Activated CD8-positive, alpha-beta T cell treated with anti-CD3 and anti-CD28 coated beads, Interleukin-2, amount 10 ng/mL, durations not matched to agents 7 days and 5 days (primary cell): ENCODE measurements at regions of chr6 and their contacts with region 1.

Region 1: DNA sequence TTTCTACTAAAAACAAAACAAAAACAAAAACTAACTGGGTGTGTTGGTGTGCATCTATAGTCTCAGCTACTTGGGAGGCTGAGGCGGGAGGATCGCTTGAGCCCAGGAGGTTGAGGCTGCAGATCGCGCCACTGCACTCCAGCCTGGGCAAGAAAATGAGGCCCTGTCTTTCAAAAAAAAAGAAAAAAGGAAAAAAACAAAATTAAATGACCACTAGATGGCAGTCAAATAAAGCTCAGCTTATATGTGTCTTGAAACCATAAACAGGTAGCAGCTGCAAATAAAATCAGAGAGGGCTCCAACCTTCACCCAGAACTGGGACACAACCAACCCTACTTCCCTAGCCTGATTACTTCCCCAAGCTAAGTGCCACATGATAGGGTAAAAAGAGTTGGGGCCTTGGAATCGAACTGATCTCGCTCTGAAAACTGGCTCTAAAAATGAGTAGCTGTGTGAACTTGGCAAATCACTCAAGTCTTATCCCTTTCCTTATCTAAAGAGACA is 67.1 kb upstream of the ADGRF4 start:
- DNase-seq: no peak
- ATAC-seq: peak; percentile 67
- H3K4me3 Mint-ChIP-seq: no peak overlapping the region
- H3K27ac Mint-ChIP-seq: peak overlapping the region; percentile 5
- H3K4me1 Mint-ChIP-seq: peaks cover 12% of the 10 kb centered on the region
- H3K27me3 Mint-ChIP-seq: peaks cover 5% of the 10 kb centered on the region

Region 2: DNA sequence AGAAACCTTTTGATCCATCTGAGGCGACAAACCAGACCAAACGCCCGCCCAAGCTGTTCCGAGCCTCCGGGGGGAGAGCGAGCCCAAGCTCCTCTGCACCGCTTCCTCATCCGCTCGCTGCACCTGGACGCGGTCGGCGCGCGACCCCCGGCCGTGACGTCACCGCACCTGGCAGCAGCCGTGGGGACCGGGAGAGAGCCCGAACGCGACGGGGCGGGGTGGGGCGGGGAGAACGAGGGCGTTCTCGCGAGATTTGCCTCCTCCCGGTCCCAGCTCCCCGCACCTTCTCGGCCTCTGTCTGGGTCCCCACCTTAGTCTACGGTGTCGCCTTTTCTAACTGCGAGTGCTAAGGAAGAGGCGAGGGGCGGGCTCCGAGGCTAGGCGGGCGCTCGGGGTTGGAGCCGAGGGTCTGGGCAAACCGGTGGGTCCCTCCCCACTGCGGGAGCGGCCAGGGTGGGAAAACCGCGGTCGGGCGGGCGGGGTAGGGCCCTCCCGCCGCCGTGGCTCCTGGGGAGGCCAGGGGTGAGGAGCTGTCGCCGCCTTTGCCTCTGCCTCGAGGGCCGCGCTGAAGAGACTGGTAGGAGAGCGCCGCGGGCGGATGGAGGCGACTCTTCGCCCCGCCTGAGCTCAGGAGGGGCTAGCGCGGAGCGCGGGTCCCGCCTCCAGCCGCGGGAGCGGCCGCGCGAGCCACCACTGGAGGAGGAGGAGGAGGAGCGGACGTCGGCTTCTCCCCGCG is 153.7 kb before region 1 on chr6 and contains the start of gene CD2AP:
- CTCF ChIA-PET with region 1: interaction called, 6 read pairs
- POLR2A ChIA-PET with region 1: interaction called, 10 read pairs
- DNase-seq: peak; percentile 94
- ATAC-seq: peak; percentile 84
- H3K4me3 Mint-ChIP-seq: peak within 1 kb of the TSS; percentile 95
- H3K27ac Mint-ChIP-seq: peak within 1 kb of the TSS; percentile 95
- H3K4me1 Mint-ChIP-seq: peaks cover 35% of the 10 kb centered on the region
- H3K27me3 Mint-ChIP-seq: no peaks in the 10 kb centered on the region
- total RNA-seq, gene CD2AP: 38.8 to 39.2 TPM

Region 3: GRCh38 chr6:47567586-47567985 is 63.7 kb before region 1 on chr6:
- CTCF ChIA-PET with region 1: no interaction called
- POLR2A ChIA-PET with region 1: no interaction called
- DNase-seq: no peak
- ATAC-seq: no peak
- H3K4me3 Mint-ChIP-seq: no peak overlapping the region
- H3K27ac Mint-ChIP-seq: no peak overlapping the region
- H3K4me1 Mint-ChIP-seq: no peaks in the 10 kb centered on the region
- H3K27me3 Mint-ChIP-seq: no peaks in the 10 kb centered on the region

Region 4: GRCh38 chr6:47729019-47729418 is 97.7 kb after region 1 on chr6:
- CTCF ChIA-PET with region 1: interaction called, 63 read pairs
- POLR2A ChIA-PET with region 1: no interaction called
- DNase-seq: no peak
- ATAC-seq: no peak
- H3K4me3 Mint-ChIP-seq: no peak overlapping the region
- H3K27ac Mint-ChIP-seq: no peak overlapping the region
- H3K4me1 Mint-ChIP-seq: peaks cover 5% of the 10 kb centered on the region
- H3K27me3 Mint-ChIP-seq: no peaks in the 10 kb centered on the region

Region 5: DNA sequence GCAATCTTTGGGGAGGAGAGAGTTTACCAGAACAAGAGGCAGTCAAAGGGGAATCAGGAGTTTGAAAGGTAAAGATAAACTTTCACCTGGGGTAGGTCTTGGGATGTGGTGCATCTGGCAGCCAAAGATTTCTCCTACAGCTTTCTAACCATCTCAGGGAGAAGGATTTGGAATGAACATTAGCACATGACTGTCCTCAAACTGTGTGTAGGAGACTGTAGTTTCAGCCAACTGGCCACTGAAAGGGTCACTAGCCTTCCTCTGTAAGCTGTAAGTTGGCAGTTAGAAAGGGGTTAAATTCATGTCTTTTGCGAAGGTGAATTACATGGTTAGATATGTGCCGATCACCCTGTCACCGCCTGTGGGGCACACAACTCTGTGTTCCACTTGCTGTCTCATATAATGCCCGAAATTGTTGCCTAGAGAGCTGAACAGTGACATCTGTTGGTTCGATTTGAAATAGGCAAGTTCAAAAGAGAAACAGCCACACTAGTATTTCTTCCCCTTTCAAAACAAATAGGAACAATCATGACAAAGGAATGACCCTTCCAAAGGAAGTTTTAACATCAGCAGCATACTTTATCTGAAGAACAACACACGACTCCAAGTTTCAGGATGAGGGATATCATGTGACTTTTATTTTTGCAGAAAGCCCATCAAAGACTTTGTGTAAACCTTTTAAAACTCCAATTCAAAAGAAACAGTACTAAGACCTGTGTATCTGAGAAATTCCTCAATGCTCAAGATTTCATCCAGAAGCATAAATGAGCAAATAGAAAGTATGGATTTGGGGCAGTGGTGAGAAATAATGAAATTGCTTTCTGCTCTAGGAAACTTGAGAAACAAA is 149.4 kb after region 1 on chr6:
- CTCF ChIA-PET with region 1: interaction called, 93 read pairs
- POLR2A ChIA-PET with region 1: no interaction called
- DNase-seq: peak; percentile 55
- ATAC-seq: peak; percentile 98
- H3K4me3 Mint-ChIP-seq: no peak overlapping the region
- H3K27ac Mint-ChIP-seq: no peak overlapping the region
- H3K4me1 Mint-ChIP-seq: peaks cover 7% of the 10 kb centered on the region
- H3K27me3 Mint-ChIP-seq: peaks cover 22% of the 10 kb centered on the region